ENCODE measurements at regions of chr7 and their contacts with region 1.

Region 1: DNA sequence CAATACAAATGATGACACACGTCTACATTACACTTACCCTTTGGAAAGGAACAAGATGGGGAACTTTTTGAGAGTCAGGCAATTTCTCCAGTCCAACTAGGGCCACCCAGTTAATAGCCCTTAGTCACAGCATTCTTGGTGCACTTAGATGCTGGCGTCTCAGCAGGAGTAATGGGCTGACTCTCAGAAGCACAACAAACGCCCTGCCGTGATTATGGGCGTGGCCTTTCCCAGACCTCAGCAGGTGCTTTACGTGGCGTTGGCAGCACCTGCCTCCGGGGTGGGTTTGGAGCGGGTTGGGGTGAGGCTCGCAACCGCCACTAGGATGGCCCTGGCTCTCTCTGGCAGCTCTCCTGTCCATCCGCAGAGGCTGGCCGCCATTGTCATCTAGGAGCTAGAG is 147.6 kb upstream of the SHH start:
- DNase-seq: peak in 1 of 2 donors; percentile 60
- H3K4me3 ChIP-seq: no peak overlapping the region
- CTCF ChIP-seq: no peak
- POLR2A ChIP-seq: no peak

Region 2: GRCh38 chr7:154942691-154943090 is 1017.2 kb before region 1 on chr7:
- intact Hi-C with region 1: loop called (anchors 5 kb)
- DNase-seq: no peak
- H3K4me3 ChIP-seq: no peak overlapping the region
- CTCF ChIP-seq: no peak
- POLR2A ChIP-seq: no peak

Region 3: DNA sequence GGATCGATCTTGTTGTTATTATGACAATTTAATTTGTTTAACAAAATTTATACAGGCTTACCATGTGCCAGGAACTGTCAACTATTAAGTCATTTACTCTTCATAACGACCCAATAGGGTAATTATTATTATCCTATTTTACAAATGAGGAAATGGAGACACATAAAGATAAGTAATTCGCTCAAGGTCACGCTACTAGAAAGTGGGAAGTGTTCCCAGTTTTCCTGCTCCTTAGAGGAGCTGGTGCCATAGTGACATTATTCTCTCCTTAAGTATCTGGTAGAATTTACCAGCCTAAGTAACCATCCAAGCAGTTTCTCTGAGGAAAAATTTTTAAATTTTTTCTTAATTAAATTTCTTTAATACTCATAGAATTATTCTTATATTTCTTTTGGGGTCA is 319.7 kb after region 1 on chr7:
- intact Hi-C with region 1: no loop called
- DNase-seq: no peak
- H3K4me3 ChIP-seq: no peak overlapping the region
- CTCF ChIP-seq: no peak
- POLR2A ChIP-seq: no peak

Measured in lower leg skin (tissue), 4 donors.